WTC11 (cell line): ENCODE measurements at regions of chr1 and their contacts with region 1.

Region 1: GRCh38 chr1:210311726-210312493 is 16.8 kb upstream of the HHAT start:
- DNase-seq: no peak
- ATAC-seq: no peak
- H3K4me3 Mint-ChIP-seq: peak overlapping the region; percentile 72
- H3K27ac Mint-ChIP-seq: peak overlapping the region; percentile 38; the same call in 1 of the 2 replicates
- H3K4me1 Mint-ChIP-seq: peaks cover 4% of the 10 kb centered on the region
- H3K27me3 Mint-ChIP-seq: peaks cover 11% of the 10 kb centered on the region
- CTCF ChIP-seq: no peak

Region 2: DNA sequence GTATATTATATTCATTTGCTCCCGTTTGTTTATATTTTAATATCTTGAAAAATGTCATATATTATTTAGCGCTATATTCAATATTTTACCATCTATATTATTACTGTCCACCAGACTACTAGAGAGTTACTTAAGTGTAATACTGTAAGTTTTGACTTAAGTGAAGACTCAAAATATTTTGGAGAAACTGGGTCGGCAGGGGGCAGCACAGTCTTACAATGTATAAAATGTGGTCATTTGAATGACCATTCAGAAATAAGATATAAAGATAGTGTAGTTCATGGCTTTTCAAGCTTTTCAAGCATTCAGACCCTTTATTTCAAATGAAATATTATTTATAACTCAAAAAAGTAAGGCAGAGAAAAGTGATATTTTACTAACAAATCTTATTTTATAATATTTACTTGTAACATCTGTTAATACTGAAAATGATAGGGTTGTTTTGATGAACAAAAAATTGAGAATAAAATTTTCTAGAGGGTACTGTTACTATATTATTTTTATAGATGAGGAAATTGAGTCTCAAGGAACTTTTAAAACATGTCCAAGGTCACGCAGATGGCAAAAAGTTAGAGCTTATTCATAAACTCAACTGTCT is 168.3 kb before region 1 on chr1:
- CTCF ChIA-PET with region 1: interaction called, 13 read pairs
- POLR2A ChIA-PET with region 1: interaction called, 4 read pairs
- DNase-seq: peak; percentile 68
- ATAC-seq: no peak
- H3K4me3 Mint-ChIP-seq: no peak overlapping the region
- H3K27ac Mint-ChIP-seq: no peak overlapping the region
- H3K4me1 Mint-ChIP-seq: no peaks in the 10 kb centered on the region
- H3K27me3 Mint-ChIP-seq: no peaks in the 10 kb centered on the region; the same call in 1 of the 2 replicates
- CTCF ChIP-seq: peak; percentile 49

Region 3: DNA sequence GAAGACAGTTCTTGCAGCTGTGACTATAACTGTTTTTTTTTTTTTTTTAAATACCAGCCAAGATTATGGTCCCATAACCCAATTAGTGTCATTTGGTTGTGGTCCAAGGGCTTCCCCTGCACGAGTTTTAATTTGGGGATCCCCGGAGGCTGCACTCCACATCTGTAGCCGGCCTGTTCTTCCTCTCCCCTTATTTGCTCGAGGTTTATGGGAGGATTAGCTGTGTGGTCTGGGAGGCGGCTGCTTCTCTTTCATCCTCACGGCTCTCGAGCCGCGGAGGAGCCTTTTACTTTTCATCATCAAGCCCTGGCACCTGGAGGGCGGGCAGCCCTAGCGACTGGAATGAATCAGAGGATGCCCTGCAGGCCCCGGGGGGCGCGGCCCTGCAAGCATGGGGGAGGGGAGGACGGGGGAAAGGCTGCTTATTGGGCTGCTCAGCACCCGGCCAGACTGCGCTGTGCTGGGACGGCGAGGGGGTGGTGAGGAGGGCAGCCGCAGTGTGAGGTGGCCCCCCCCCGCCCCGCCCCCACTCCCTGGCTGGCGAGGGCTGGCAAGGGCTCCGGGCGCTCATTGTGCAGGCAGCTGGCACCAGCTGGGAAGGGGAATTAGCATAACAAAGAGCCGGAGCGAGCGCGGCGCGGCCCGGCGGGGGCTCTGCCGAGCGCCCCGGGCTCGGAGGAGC is 60.8 kb before region 1 on chr1:
- CTCF ChIA-PET with region 1: interaction called, 13 read pairs
- POLR2A ChIA-PET with region 1: no interaction called
- DNase-seq: peak; percentile 79
- ATAC-seq: peak; percentile 52
- H3K4me3 Mint-ChIP-seq: peak overlapping the region; percentile 72
- H3K27ac Mint-ChIP-seq: peak overlapping the region; percentile 53
- H3K4me1 Mint-ChIP-seq: peaks cover 39% of the 10 kb centered on the region
- H3K27me3 Mint-ChIP-seq: peaks cover 17% of the 10 kb centered on the region
- CTCF ChIP-seq: no peak

Region 4: GRCh38 chr1:210292231-210292871 is 19.6 kb before region 1 on chr1:
- CTCF ChIA-PET with region 1: interaction called, 17 read pairs
- POLR2A ChIA-PET with region 1: no interaction called
- DNase-seq: peak; percentile 84
- ATAC-seq: peak; percentile 93
- H3K4me3 Mint-ChIP-seq: peak overlapping the region; percentile 63
- H3K27ac Mint-ChIP-seq: no peak overlapping the region
- H3K4me1 Mint-ChIP-seq: peaks cover 37% of the 10 kb centered on the region
- H3K27me3 Mint-ChIP-seq: peaks cover 36% of the 10 kb centered on the region
- CTCF ChIP-seq: no peak

Region 5: DNA sequence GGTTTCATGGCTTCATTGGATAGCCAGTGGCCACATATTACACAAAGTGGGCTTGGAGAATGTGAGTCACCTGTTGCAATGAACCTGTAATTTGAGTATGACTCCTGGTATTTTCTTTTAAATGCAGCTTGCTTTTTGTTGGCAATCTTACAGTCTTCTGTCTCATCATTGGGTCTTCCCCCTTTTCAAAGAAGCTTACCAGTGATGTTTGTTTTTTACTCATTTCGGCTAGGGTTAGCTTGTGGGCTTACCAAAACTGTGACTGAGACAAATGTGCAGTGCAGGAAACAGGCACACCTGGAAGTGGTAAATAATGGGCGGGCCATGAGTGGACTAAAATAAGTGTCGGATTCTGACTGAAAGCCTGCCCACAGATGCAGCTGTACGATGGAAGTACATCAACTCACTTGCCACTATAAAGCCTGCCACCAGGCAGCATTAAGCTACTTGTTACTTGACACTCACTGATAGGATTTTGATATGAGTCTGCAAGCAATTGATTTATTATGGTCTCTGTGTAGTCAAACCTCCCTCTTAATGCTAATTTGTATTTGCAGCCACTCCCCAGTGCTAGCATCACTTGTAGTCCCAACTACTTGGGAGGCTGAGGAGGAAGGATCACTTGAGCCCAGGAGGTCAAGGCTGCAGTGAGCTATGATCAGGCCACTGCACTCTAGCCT is 20.9 kb after region 1 on chr1:
- CTCF ChIA-PET with region 1: no interaction called
- POLR2A ChIA-PET with region 1: no interaction called
- DNase-seq: no peak
- ATAC-seq: no peak
- H3K4me3 Mint-ChIP-seq: no peak overlapping the region
- H3K27ac Mint-ChIP-seq: no peak overlapping the region
- H3K4me1 Mint-ChIP-seq: peaks cover 10% of the 10 kb centered on the region
- H3K27me3 Mint-ChIP-seq: peaks cover 82% of the 10 kb centered on the region
- CTCF ChIP-seq: no peak